Psoas muscle (tissue), 8 donors: ENCODE measurements at regions of chr16 and their contacts with region 1.

Region 1: DNA sequence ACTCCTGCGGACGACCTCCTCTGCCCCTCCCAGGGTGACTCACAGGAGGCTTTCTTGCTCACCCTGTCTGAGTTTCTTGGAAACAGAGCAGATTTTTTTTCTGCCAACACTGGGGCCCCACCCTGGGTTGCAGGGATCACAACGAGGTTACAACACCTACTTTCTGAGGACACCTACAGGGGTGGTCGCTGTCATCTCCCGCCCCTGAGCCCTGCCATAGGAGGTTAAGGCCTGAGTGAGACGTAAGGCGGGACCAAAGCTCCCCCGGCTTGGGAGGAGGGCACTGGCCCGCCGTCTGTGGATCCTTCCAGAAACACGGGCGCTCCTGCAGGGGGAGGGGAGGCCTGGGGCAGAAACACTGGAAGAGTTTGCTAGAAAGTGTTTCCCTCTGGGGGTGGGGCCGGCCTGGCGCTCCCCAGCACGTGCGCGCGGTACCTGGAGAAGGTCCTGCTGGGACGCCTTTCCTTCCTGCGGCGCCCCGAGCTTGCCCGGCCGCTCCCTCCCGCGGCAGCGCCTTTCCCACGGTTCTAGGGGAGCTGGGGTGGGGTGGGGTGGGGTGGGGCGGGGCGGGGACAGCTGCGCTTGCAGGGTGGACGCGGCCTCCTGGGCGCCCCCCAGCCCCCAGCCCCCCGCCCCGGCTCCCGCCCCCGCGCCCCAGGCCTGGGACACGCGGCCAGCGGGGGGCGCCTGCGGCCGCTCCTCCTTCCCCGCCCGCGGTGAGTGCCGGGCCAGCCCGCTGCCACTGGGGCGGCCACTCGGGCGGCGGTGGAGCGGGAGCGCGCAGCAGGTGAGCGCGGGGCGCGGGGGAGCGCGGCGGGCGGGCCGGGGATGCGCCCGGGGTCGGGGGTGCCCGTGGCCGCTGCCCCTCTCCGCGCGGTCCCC is 20.7 kb upstream of the ADCY7 start:
- DNase-seq: peak in 1 of 2 donors; percentile 55
- ATAC-seq: peak; percentile 61 to 82 (median 74)
- H3K4me3 ChIP-seq: peak overlapping the region; percentile 70
- H3K27ac ChIP-seq: no peak overlapping the region
- H3K4me1 ChIP-seq: no peaks in the 10 kb centered on the region
- H3K27me3 ChIP-seq: peaks cover 0 to 8% (median 4%) of the 10 kb centered on the region in 3 donors
- CTCF ChIP-seq: peak; percentile 40

Region 2: DNA sequence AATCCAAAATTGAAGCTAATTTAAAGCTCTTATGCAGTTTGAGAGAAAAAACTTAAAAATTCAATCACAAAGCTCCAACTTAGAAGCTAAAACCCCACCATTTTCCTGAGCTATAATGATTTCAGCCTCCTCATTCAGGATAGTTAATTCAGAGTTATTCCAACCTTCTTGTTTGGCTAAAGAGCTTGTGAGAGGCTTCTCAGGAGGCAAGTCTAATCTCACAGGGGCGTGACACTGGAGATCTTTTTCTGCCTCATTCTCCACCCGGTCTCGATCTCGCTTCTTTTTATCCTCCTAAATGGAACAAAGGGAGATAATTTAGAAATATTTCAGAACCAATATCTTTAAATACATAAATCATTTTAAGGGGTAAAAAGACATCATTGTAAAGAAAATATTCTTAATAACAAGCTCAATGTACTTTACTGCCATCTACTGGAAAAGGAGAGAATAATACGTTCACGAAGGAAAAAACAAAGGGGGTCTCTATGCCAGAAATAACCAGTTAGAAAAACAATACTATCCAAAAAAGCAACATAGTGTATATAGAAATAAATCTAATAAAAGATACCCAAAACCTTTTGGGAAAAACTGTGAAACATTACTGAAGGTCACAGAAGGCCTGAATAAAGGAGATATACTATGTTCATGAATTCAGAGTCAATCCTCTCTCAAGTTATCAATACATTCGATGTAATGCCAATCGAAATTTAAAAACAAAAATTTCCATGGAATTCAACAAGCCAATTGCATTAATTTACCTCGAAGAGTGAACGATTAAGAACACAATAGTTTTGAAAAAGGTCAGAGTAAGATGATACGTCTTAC is 109.2 kb after region 1 on chr16:
- intact Hi-C with region 1: loop called in 1 of 2 experiments (anchors 10 kb)
- DNase-seq: no peak
- ATAC-seq: no peak
- H3K4me3 ChIP-seq: no peak overlapping the region
- H3K27ac ChIP-seq: no peak overlapping the region
- H3K4me1 ChIP-seq: peaks cover 3% of the 10 kb centered on the region
- H3K27me3 ChIP-seq: no peaks in the 10 kb centered on the region
- CTCF ChIP-seq: peak; percentile 61